ENCODE measurements at regions of chr18 and their contacts with region 1.

Region 1: DNA sequence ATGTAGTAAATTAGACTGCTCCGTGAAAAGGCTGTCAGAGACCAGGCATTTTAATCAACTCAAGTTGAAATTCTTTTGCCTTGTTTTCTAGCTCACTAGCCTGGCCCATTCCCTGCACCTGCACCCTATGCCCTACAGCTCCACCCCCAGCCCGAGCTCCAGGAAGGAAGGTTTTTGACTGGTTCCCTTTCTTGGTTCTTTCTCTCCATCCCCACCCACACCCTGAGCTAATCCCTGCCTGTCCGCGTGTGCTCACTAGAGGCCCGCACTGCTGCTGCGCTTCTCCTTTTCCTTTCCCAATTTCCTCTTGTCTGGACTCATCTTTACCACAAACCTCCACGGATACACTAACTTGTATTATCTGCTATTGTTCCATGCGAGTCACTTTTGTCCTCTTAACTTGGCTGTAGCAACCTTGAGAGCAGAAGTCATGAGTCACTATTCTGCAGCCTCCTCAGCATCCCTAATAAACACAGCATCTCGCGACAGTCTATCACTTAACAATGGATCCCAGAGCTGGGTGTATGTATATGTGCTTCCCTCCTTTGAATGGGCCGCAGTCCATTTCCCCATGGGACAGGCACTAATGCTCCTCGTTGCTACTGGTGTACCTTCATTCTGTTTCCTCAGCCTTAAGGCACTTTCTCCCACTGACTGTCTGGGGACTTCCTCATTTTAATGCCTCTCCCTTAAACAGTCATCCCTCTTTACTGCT is 36.5 kb downstream of the COLEC12 start:
- H3K4me3 ChIP-seq: no peak overlapping the region
- H3K27ac ChIP-seq: no peak overlapping the region
- H3K4me1 ChIP-seq: no peaks in the 10 kb centered on the region
- CTCF ChIP-seq: no peak

Region 2: DNA sequence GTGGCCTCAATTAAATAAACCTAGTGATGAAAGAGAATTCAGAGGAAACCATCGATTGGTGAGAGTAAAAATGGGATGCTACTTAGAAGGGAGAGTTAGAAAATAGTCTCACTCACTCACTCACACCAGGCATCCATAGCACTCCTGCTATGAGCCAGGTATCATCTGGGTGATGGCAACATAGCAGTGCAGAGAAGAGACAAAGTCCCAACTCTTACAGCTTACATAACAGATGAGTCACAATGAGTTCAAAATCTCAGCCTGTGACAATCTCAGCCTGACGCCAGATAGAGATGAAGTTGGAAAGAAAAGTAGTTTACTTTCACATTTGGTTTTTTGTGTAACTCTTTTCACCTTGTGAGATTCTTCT is 140.7 kb before region 1 on chr18:
- CTCF ChIA-PET with region 1: no interaction called
- POLR2A ChIA-PET with region 1: no interaction called
- H3K4me3 ChIP-seq: no peak overlapping the region
- H3K27ac ChIP-seq: no peak overlapping the region
- H3K4me1 ChIP-seq: peaks cover 3% of the 10 kb centered on the region; the same call in 1 of the 2 replicates
- CTCF ChIP-seq: no peak

Region 3: GRCh38 chr18:477565-477964 is 13.6 kb after region 1 on chr18:
- CTCF ChIA-PET with region 1: interaction called, 13 read pairs
- POLR2A ChIA-PET with region 1: no interaction called
- H3K4me3 ChIP-seq: no peak overlapping the region
- H3K27ac ChIP-seq: no peak overlapping the region
- H3K4me1 ChIP-seq: peaks cover 7% of the 10 kb centered on the region; the same call in 1 of the 2 replicates
- CTCF ChIP-seq: 0 out of 2 replicates have a peak, but pooled peaks have one; percentile 12

Measured in HEK293 (cell line).